Activated CD4-positive, alpha-beta T cell treated with anti-CD3 and anti-CD28 coated beads for 36 hours (primary cell): ENCODE measurements at regions of chr3 and their contacts with region 1.

Region 1: DNA sequence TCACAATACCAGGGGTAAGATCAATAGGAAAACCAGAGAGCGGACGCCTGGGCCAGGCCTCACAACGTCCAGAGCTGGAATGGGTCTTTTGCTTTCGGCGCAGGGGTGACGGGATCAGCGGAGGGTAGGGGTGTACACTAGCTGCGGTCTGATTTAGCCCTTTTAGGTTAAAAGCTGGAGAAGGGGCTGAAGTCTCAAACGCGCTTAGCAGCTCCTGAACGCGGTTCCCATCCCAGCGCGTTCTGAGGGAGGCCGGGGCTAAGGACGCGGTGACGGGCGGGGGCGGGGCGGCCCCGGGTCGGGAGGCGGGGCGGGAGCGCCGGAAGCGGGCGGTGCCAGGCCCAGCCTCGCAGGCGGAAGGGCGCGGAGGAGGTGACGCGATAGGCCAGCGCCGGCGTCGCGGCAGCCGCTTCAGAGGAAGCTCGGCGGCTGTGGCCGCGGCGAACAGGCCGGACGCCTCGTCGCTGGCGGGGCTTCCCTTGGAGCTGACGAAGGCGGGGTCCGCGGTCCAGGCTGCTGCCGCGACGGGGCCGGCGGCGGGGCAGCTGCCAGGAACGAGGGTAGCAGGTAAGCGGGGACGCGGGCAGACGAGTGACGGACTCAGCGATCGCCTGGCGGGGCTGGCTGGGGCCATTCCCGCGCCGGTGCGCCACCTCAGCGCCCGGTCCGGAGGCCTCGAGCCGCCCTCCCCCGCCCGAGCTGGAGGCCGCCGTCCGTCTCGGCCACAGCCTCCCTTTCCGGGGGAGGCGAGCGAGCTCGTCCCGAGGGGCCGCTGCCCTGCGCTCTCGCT is at the start of gene SENP5:
- DNase-seq: peak; percentile 95
- ATAC-seq: peak; percentile 96
- H3K4me3 Mint-ChIP-seq: peak within 1 kb of the TSS; percentile 99
- H3K27ac Mint-ChIP-seq: peak within 1 kb of the TSS; percentile 95
- H3K4me1 Mint-ChIP-seq: peaks cover 24% of the 10 kb centered on the region
- H3K27me3 Mint-ChIP-seq: no peaks in the 10 kb centered on the region
- total RNA-seq, gene SENP5: 27.7 to 33.0 TPM

Region 2: GRCh38 chr3:196632046-196632751 is 235.5 kb before region 1 on chr3:
- CTCF ChIA-PET with region 1: no interaction called
- POLR2A ChIA-PET with region 1: no interaction called
- intact Hi-C with region 1: loop called in 1 of 2 experiments (anchors 5 kb)
- DNase-seq: peak; percentile 93
- ATAC-seq: peak; percentile 80
- H3K4me3 Mint-ChIP-seq: peak overlapping the region; percentile 81
- H3K27ac Mint-ChIP-seq: peak overlapping the region; percentile 95
- H3K4me1 Mint-ChIP-seq: peaks cover 55% of the 10 kb centered on the region
- H3K27me3 Mint-ChIP-seq: no peaks in the 10 kb centered on the region

Region 3: GRCh38 chr3:196739671-196740480 is 127.8 kb before region 1 on chr3 and contains the start of gene PAK2:
- CTCF ChIA-PET with region 1: no interaction called
- POLR2A ChIA-PET with region 1: interaction called, 3 read pairs
- intact Hi-C with region 1: loop called in 1 of 2 experiments (anchors 1 kb)
- DNase-seq: peak; percentile 94
- ATAC-seq: peak; percentile 92
- H3K4me3 Mint-ChIP-seq: peak within 1 kb of the TSS; percentile 93
- H3K27ac Mint-ChIP-seq: peak within 1 kb of the TSS; percentile 99
- H3K4me1 Mint-ChIP-seq: peaks cover 25% of the 10 kb centered on the region
- H3K27me3 Mint-ChIP-seq: no peaks in the 10 kb centered on the region
- total RNA-seq, gene PAK2: 57.6 to 82.2 TPM

Region 4: DNA sequence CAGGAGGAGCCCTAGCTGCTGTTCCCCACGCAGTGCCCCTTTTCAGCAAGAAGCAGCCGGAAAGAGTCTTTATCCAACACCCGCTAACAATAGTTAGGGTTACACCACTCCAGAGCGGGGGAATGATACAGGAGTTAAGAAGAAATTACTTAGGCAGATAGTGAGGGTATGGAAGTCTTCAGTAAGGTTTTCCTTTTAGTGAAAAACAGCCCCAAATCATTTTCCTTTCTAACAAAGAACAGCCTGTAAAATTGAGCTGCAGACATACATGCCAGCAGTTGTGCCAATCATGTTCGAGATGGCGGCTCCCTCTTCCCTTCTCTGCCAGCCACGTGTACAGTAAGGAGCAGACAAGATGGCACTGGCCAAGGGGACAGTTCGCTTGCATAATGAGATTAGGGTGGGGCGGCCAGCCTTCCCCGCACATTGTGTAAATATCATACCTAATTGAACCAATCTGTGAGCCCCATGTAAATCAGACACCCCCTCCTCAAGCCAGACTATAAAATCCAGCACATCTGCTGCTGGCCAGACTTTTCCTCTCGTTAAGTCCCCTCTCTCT is 18.4 kb before region 1 on chr3:
- CTCF ChIA-PET with region 1: no interaction called
- POLR2A ChIA-PET with region 1: no interaction called
- intact Hi-C with region 1: no loop called
- DNase-seq: no peak
- ATAC-seq: no peak
- H3K4me3 Mint-ChIP-seq: no peak overlapping the region
- H3K27ac Mint-ChIP-seq: no peak overlapping the region
- H3K4me1 Mint-ChIP-seq: peaks cover 2% of the 10 kb centered on the region
- H3K27me3 Mint-ChIP-seq: peaks cover 2% of the 10 kb centered on the region

Region 5: GRCh38 chr3:196889844-196890708 is 22.4 kb after region 1 on chr3:
- CTCF ChIA-PET with region 1: interaction called, 4 read pairs
- POLR2A ChIA-PET with region 1: interaction called, 4 read pairs
- intact Hi-C with region 1: loop called in 1 of 2 experiments (anchors 2 kb)
- DNase-seq: no peak
- ATAC-seq: no peak
- H3K4me3 Mint-ChIP-seq: no peak overlapping the region
- H3K27ac Mint-ChIP-seq: no peak overlapping the region
- H3K4me1 Mint-ChIP-seq: peaks cover 33% of the 10 kb centered on the region
- H3K27me3 Mint-ChIP-seq: no peaks in the 10 kb centered on the region

Region 6: DNA sequence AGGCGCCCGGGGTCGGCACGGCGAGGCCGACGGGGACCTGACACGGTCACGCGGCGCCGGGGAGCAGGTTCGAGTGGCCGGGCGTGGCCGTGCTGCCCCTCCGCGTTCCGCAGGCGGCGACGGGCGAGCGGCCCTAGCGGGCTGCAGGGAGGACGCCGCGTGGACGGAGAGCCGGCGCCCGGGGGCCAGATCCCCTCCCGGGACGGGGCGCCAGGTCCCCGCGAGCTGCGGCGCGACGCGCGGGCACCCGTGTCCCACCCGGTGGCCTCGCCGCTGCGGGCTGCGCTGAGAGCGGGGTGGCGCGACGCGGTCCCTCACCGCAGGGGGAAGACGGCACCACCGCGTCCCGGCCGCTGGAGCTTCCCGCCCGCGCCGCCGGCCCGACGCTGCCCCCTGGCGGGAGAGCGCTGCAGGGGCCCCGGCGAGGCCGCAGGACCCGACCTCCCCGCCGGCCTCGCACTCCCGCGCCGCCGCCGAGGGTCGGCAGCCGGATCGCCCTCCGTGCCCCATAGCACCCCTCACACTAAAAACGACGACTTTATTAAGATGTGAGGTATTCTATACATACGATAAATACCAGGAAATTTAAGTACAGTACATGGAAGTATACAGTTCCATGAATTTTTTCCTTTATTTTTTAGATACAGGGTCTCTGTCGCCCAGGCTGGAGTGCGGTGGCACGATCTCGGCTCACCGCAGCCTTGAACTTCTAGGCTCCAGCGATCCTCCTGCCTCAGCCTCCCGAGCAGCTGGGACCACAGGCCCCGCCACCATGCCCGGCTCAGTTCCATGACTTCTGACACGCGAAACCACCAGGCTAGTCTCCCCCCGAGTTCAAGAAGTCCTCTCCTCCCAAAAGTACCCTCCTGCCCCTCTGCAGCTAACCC is 102.2 kb after region 1 on chr3:
- CTCF ChIA-PET with region 1: no interaction called
- POLR2A ChIA-PET with region 1: no interaction called
- intact Hi-C with region 1: loop called in 1 of 2 experiments (anchors 1 kb)
- DNase-seq: peak; percentile 80
- ATAC-seq: peak; percentile 65
- H3K4me3 Mint-ChIP-seq: peak overlapping the region; percentile 63
- H3K27ac Mint-ChIP-seq: peak overlapping the region; percentile 31
- H3K4me1 Mint-ChIP-seq: peaks cover 15% of the 10 kb centered on the region
- H3K27me3 Mint-ChIP-seq: peaks cover 11% of the 10 kb centered on the region